ENCODE measurements at regions of chr2 and their contacts with region 1.

Region 1: DNA sequence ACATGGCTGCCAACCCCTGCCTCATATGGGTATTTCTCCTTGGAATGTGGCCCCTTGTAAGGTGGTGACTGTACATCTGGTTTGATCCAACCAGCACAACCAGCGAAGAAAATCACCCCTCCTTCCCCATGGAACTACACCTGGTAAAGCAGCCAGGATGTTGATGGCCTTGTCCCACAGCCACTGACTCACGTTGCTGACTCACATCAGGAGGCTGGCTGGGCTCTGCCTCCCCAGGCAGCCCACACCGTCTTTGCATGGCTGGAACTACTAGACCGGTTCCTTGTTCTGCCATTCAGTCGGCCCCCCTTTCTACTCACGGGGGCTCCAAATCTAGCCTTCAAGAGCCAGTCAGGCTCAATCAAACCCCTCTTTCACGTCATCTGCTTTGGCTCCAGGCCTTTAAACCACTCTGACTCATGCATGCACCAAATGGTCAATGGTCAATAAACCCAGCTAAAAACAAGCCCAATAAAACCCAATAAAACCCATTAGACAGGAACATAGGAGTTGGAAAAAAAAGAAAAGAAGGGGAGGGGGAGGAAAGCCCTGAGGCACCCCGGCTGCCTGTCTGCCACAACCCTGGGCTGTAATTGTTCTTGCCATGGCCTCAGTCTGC is 114.8 kb downstream of the PLB1 start:
- DNase-seq: no peak
- ATAC-seq: no peak
- H3K4me3 Mint-ChIP-seq: no peak overlapping the region
- H3K27ac Mint-ChIP-seq: no peak overlapping the region
- H3K4me1 Mint-ChIP-seq: peaks cover 28% of the 10 kb centered on the region
- H3K27me3 Mint-ChIP-seq: no peaks in the 10 kb centered on the region

Region 2: GRCh38 chr2:28621172-28622100 is 10.7 kb after region 1 on chr2:
- CTCF ChIA-PET with region 1: interaction called, 31 read pairs
- POLR2A ChIA-PET with region 1: interaction called, 9 read pairs
- DNase-seq: peak; percentile 79
- ATAC-seq: peak; percentile 84
- H3K4me3 Mint-ChIP-seq: peak overlapping the region; percentile 64
- H3K27ac Mint-ChIP-seq: peak overlapping the region; percentile 94
- H3K4me1 Mint-ChIP-seq: peaks cover 95% of the 10 kb centered on the region
- H3K27me3 Mint-ChIP-seq: no peaks in the 10 kb centered on the region

Measured in activated CD8-positive, alpha-beta T cell treated with anti-CD3 and anti-CD28 coated beads, Interleukin-2, amount 10 ng/mL, durations not matched to agents 7 days and 5 days (primary cell).